Dorsolateral prefrontal cortex (tissue), 120 donors: ENCODE measurements at regions of chr1 and their contacts with region 1.

Region 1: DNA sequence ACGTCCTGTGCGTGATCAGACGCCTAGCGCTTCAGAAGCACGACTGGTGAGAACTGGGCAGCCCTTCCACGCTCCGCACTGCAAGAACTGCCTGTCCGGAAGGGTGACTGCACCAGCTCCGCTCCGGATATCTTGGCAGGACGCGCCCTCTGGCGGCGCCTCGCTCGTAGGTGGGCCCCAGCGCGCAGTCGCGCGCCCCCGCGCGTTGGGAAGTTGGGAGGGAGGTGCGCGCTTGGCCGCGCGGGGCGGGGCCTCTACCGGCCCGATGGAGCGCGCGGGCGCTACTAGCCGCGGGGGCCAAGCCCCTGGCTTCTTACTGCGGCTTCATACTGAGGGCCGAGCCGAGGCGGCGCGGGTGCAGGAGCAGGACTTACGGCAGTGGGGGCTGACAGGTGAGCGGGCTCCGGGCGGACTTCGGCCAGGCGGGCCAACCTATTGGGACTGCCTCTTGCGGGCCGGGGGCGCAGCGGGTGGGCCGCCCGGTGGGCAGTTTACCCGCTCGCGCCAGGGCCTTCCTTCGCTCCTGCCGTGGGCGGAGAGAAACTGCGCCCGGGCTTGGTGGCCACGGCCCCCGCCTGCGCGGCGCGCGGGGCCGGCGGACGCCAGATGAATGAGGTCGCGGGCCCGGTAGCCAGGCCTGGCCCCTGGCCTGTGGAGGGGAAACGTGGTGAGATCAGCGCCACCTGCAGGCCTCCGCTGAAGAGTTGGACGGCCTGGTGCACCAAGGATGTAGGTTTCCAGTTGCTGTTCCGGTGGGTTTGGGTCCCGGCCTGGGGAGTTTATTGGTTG is at the start of gene CHD1L:
- DNase-seq: peak; percentile 91 to 95 (median 93)
- H3K4me3 ChIP-seq: peak within 1 kb of the TSS; percentile 61 to 100 (median 93)
- H3K27ac ChIP-seq: peak within 1 kb of the TSS; percentile 13 to 98 (median 93)
- H3K27me3 ChIP-seq: no peaks in the 10 kb centered on the region
- CTCF ChIP-seq: peak; percentile 63 to 98 (median 87)
- total RNA-seq, gene CHD1L: 27.3 to 72.3 (median 39.1) TPM

Region 2: GRCh38 chr1:147172168-147172992 is 70.3 kb before region 1 on chr1 and contains the start of gene PRKAB2:
- intact Hi-C with region 1: loop called (anchors 1 kb)
- DNase-seq: peak; percentile 91 to 96 (median 95)
- H3K4me3 ChIP-seq: peak within 1 kb of the TSS; percentile 70 to 99 (median 91)
- H3K27ac ChIP-seq: peak within 1 kb of the TSS; percentile 65 to 99 (median 94)
- H3K27me3 ChIP-seq: no peaks in the 10 kb centered on the region
- CTCF ChIP-seq: peak; percentile 69 to 99 (median 92)
- total RNA-seq, gene PRKAB2: 12.3 to 42.9 (median 24.3) TPM

Region 3: GRCh38 chr1:147264158-147264768 is 21.6 kb after region 1 on chr1:
- intact Hi-C with region 1: loop called in 1 of 2 experiments (anchors 2 kb)
- DNase-seq: no peak
- H3K4me3 ChIP-seq: no peak overlapping the region
- H3K27ac ChIP-seq: peak overlapping the region in 20 of 59 donors; percentile 1 to 96 (median 88)
- H3K27me3 ChIP-seq: no peaks in the 10 kb centered on the region
- CTCF ChIP-seq: no peak